ENCODE measurements at regions of chr14 and their contacts with region 1.

Region 1: DNA sequence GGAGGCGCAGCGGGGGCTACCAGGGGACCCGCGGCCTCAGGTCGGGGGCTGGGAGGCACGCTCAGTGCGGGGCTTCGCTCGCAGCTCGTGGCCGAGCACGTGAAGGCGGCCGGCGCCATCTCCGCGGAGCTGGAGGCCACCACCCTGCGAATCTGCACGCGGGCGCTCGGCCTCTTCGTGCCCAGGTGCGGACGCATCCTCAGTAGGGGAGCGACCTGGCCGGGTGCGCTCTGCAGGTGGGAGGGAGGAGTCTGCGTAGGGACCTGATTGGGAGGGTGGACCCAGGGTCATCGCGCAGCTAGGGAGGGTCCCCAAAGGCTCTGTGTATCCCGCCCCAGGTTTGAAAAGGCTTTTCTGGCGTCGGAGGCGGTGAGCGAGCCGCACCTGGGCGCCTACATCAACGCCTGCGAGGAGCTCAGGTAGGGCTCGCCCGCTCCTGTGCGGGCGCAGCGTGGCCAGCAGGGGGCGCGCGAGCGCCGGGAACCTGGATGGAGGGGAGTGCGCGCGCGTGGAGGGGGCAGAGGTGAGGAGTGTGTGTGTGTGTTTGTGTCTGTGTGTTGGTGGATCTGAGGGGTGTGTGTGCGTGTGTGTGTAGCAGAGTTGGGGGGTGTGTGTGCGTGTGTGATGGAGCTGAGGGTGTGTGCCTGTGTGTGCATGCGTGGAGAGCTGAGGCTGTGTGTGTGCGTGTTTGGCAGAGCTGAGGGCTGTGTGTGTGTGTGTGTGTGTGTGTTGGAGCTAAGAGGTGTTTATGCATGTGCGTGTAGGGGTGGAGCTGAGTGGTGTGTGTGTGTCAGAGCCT is 10.3 kb downstream of the EXOC3L4 start:
- DNase-seq: peak in 2 of 3 donors; percentile 72 to 75
- H3K4me3 ChIP-seq: peak overlapping the region in 2 of 7 experiments; percentile 7 to 8
- H3K27ac ChIP-seq: no peak overlapping the region
- H3K4me1 ChIP-seq: peaks cover 0 to 48% (median 35%) of the 10 kb centered on the region in 4 experiments
- H3K27me3 ChIP-seq: peaks cover 0 to 41% (median 20%) of the 10 kb centered on the region in 5 experiments

Region 2: GRCh38 chr14:103094406-103095209 is 10.2 kb before region 1 on chr14 and contains the start of gene EXOC3L4:
- CTCF ChIA-PET with region 1: interaction called, 41 read pairs
- POLR2A ChIA-PET with region 1: no interaction called
- DNase-seq: no peak
- H3K4me3 ChIP-seq: peak within 1 kb of the TSS in 1 of 7 experiments; percentile 23
- H3K27ac ChIP-seq: no peak within 1 kb of the TSS
- H3K4me1 ChIP-seq: peaks cover 0 to 20% (median 16%) of the 10 kb centered on the region in 4 experiments
- H3K27me3 ChIP-seq: peaks cover 0 to 11% (median 0%) of the 10 kb centered on the region in 5 experiments

Region 3: GRCh38 chr14:103121846-103122584 is 17.2 kb after region 1 on chr14:
- CTCF ChIA-PET with region 1: interaction called, 50 read pairs
- POLR2A ChIA-PET with region 1: interaction called, 3 read pairs
- DNase-seq: peak; percentile 88 to 97 (median 96)
- H3K4me3 ChIP-seq: peak overlapping the region in 5 of 7 experiments; percentile 29 to 80 (median 67)
- H3K27ac ChIP-seq: peak overlapping the region in 1 of 2 experiments; percentile 71
- H3K4me1 ChIP-seq: peaks cover 12 to 79% (median 68%) of the 10 kb centered on the region in 4 experiments
- H3K27me3 ChIP-seq: no peaks in the 10 kb centered on the region

Region 4: DNA sequence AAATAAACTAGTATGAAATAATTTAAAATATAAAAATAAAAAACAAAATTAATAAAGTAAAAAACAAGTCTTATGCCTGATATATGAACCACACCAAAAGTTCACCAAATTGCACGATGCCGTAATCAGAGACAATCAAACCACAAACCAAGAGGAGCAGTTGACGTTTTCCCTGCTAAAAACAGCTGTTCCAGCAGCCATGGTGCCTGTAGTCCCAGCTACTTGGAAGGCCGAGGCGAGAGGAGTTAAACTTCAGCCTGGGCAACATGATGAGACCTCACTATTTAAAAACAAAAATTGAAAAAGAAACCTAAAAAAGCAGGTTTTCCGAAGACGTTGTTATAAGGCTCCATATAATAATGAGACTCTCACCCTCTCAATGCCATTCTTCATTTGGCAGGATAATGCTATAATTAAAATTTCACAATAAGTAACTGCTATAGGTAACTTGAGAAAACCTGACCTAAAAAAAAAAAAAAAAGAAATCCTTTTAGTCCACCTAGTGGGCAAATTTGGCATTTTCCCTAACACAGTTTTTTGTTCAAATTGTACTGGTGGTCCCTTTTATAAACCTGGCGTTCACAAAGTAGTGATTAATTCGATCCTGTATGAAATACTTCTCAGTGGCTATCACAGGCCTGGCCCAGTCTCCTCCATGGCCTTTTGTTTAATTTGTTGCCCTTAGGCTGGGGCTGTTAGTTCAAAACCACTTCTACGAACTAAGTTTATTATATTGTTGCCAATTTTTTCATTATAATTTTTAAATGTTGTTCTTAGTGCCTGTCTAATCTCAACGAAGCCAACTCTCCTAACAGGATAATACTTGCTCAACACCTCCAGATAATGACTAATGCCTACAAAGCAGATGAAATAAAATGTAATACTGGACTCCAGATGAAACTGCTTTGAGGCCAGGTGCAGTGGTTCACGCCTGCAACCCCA is 80.5 kb after region 1 on chr14:
- CTCF ChIA-PET with region 1: interaction called, 38 read pairs
- POLR2A ChIA-PET with region 1: no interaction called
- DNase-seq: peak; percentile 50 to 77 (median 66)
- H3K4me3 ChIP-seq: no peak overlapping the region
- H3K27ac ChIP-seq: no peak overlapping the region
- H3K4me1 ChIP-seq: peaks cover 0 to 9% (median 7%) of the 10 kb centered on the region in 4 experiments
- H3K27me3 ChIP-seq: peaks cover 3 to 47% (median 21%) of the 10 kb centered on the region in 5 experiments

Measured in common myeloid progenitor, CD34-positive (primary cell).